ENCODE measurements at regions of chr9 and their contacts with region 1.

Region 1: DNA sequence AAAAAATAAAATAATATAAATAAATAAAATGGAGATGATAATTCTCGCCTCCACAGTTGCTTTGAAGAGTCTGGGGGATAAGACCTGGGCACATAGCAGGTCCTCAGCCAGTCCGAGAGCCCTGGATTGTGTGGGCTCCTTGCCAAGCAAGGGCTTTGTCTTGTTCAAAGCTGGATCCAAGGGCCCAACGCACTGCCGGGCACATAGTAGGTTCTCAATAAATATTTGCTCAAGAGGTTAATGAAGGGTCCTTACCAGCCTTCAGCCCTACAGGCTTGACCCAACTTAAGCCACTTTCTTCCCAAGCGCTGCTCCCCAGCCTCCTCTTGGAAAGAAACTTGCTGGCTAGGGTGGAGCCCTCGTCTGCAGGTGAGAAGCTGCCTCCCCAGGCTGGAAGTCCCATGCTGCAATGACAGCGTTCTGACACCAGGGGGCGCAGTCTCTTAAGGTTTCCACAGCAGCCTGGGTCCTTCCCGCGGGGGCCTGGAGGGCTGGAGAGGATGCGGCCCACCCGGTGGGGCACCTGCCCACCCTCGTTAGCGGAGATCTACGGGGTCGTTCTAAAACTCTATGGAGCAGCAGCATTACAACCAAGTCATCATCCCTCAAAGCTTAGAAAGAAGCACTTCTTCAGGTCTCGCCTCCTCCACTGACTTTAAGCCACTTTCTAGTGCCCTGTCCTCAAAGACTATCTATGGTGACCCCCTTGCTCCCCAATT is 115.2 kb downstream of the LHX2 start:
- DNase-seq: peak; percentile 70 to 82 (median 78)
- H3K4me3 ChIP-seq: no peak overlapping the region
- H3K27ac ChIP-seq: no peak overlapping the region
- H3K4me1 ChIP-seq: peaks cover 0 to 4% (median under 1%) of the 10 kb centered on the region in 4 experiments
- H3K27me3 ChIP-seq: no peaks in the 10 kb centered on the region

Region 2: DNA sequence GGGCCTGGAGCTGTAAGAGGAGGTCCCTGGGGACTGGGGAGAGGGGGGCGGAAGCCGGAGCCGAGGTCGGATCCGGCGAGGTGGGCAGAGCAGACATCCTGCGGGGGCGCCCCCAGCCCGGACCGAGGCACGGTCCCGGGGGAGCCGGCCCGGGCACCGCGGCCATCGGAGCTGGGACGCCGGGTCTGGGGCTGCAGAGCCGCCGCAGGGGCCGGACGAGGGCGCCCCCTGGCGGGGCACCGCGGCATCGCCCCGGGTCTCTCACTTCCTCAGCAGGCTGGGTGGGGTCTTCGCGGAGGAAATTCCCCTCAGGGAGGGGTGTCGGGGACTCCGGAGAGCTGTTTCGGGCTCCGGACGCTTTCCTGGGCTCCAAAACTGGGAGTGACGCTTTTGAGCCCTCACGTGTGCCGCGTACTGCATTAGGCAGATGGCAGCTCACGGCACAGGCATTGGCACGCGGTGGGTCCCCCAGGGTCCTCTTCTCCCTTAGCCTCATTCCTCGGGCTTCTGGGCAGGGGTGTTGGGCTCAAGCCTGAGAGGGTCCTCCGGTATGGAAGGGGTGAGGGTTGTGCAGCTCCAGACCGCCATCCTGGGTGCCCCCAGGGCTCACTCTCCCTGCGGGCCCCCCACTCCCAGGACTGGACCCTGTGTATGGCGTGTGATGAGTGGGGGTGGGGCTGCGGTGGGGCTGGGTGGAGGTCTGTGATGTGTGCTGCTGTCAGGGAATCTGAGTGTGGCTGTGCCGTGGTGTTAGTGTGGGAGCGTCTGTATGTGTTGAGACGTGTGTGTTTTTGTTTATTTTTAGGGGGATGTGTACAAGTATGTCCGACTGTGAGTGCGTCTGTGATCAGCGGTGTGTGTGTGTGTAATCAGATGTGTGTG is 85.6 kb before region 1 on chr9:
- CTCF ChIA-PET with region 1: no interaction called
- POLR2A ChIA-PET with region 1: no interaction called
- DNase-seq: peak in 2 of 3 donors; percentile 33 to 45
- H3K4me3 ChIP-seq: peak overlapping the region in 3 of 7 experiments; percentile 32 to 57 (median 34)
- H3K27ac ChIP-seq: no peak overlapping the region
- H3K4me1 ChIP-seq: peaks cover 0 to 15% (median 10%) of the 10 kb centered on the region in 4 experiments
- H3K27me3 ChIP-seq: peaks cover 0 to 99% (median 42%) of the 10 kb centered on the region in 5 experiments

Region 3: DNA sequence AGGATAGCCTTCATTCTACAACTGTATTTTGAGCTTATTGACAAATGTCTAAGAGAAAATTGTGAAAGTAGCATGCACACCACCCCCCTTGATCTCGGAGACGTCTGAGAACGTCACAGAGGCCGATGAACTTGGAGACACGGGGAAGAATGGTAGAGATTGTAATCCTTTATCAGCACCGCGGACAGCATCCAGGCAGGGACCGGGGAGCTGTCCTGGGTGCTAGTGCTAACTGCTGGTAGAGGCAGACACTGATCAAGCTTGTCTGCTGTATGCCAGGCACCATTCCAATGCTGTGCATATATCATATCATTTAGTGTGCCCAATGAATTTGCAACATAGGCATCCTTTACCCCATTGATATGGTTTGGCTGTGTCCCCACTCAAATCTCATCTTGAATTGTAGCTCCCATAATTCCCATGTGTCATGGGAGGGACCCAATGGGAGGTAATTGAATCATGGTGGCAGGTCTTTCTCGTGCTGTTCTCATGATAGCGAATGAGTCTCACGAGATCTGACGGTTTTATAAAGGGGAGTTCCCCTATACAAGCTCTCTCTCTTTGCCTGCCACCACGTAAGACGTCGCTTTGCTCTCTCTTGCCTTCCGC is 16.3 kb before region 1 on chr9:
- CTCF ChIA-PET with region 1: interaction called, 11 read pairs
- POLR2A ChIA-PET with region 1: no interaction called
- DNase-seq: peak; percentile 70 to 87 (median 86)
- H3K4me3 ChIP-seq: no peak overlapping the region
- H3K27ac ChIP-seq: no peak overlapping the region
- H3K4me1 ChIP-seq: no peaks in the 10 kb centered on the region
- H3K27me3 ChIP-seq: peaks cover 0 to 15% (median 7%) of the 10 kb centered on the region in 5 experiments

Region 4: DNA sequence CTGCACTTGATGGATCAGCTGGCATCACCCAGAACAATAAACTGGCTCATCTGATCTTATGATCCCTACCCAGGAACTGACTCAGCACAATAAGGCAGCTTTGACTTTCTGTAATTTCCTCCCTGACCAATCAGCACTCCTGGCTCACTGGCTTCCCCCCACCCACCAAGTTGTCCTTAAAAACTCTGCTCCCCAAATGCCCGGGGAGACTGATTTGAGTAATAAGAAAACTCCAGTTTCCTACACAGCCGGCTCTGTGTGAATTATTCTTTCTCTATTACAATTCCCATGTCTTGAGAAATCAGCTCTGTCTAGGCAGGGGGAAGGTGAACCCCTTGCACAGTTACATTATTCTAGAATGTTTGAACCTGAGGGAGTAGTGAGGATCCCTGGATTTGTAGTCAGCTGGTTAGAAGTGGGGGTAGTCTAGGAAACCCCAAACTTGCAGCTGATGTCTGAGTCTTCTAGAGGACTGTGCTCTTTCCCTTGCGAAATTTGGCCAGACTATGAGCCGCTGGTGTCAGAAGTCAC is 19.4 kb after region 1 on chr9:
- CTCF ChIA-PET with region 1: no interaction called
- POLR2A ChIA-PET with region 1: no interaction called
- DNase-seq: no peak
- H3K4me3 ChIP-seq: no peak overlapping the region
- H3K27ac ChIP-seq: no peak overlapping the region
- H3K4me1 ChIP-seq: no peaks in the 10 kb centered on the region
- H3K27me3 ChIP-seq: no peaks in the 10 kb centered on the region

Region 5: DNA sequence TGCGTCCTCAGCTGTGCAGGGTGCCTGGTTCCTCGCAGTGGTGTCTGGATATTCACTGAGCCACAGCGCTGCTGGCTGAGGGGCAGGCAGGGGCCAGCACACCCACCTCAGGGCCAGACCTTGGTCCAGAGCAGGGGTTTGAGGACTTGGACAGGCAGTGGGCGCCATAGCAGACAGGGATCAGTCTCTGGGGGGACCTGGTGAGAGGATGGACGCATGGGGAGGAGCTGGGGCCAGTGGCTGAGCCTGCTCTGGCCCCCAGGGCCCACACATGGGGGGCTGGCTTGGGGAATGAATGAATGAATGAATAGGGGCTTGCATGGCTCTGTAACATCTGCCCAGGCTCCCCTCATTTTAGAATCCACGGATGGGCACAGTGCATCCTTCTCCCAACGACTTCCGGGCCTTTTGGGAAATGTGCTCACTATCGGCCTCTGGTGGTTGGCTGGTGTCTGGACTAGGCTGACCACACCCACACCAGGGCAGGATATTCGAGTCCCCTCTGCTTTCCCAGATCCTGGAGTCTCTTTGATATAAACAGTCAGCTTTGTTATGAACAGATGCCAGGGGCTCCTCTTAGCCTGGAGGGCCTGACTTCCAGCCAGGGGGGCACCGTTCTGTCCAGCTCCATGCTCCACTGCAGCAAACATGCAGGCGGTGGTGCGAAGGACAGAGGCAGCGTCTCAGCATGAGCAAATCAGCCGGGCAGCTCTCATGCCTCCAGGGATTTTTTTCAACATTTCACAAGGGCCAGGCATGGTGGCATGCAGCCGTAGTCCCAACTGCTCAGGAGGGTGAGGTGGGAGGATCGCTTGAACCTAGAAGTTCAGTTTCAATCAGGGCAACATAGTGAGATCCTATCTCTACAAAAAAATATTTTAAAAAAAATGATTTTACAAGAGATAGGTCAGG is 193.6 kb after region 1 on chr9:
- CTCF ChIA-PET with region 1: interaction called, 20 read pairs
- POLR2A ChIA-PET with region 1: no interaction called
- DNase-seq: peak; percentile 29 to 43 (median 34)
- H3K4me3 ChIP-seq: no peak overlapping the region
- H3K27ac ChIP-seq: no peak overlapping the region
- H3K4me1 ChIP-seq: peaks cover 0 to 20% (median 8%) of the 10 kb centered on the region in 4 experiments
- H3K27me3 ChIP-seq: no peaks in the 10 kb centered on the region

Region 6: DNA sequence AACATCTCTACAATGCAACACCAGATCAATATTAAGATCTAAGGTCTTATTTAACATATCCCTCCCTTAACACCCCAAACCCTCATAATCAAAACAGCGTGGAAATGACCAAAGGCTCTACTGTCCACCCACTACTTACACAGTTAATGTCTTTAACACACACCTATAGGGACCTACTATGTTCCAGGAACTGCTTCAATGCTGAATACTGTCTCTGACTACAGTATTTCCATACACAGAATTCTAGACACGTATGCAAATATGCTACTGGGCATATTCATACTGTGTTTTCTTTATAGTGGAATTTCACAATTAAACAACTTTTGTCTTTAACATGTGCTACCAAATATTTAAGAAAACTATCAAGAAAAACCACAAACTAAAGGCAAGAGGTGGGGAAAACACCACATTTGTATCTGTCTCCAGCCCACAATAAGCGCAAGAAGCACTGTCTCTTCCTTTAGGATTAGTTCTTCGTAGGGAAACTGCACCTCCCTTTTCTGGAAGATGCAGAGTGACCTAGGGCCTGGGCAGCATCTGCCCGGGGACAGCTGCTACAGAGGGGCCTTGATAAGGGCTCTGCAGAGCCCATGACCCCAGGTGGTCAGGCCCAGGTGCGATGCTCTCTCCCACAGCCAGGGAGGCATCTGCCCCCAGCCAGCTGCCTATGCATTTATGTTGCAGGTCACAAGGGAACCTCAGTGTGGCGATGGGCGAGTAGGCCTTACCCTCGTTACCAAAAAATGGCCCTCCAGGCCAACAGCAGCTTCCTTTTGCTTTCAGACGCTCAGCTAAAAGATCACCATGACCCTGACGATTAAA is 233.3 kb after region 1 on chr9:
- CTCF ChIA-PET with region 1: interaction called, 11 read pairs
- POLR2A ChIA-PET with region 1: no interaction called
- DNase-seq: no peak
- H3K4me3 ChIP-seq: no peak overlapping the region
- H3K27ac ChIP-seq: no peak overlapping the region
- H3K4me1 ChIP-seq: no peaks in the 10 kb centered on the region
- H3K27me3 ChIP-seq: no peaks in the 10 kb centered on the region

Region 7: DNA sequence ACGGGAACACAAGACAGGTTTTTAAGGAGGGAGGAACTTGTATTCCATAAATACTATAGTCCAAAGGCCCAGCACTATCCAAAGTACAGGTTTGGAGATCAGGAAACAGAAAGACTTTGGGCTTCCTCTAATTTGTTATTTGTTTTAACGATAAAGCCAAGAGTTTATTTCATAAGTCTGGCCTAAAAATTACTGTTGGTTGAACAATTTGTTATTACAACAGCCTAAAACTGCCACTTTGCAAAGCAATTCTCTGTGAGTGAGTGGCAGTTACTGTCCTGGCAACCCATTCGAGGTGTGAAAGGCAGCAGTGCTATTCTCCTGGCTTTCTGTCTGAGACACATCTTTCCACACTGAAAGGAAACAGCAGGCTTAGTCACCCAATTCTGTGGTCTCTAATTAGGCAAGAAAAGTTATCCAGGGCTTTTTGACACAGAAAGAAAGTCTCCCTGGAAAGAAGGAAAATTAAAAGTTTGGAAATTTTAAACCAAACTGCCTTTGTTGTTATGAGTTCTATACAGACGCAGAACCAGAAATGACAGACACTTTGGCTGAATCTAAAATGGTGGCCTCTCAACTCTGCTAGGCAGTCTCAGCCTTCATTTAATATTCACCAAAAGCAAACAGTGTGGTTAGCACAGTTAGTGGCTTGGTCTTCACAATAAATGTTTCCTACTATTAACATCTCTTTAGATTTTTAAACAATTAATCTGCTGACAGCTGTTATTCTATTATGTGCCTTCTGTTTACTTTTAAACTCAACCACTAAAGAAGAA is 254.6 kb after region 1 on chr9:
- CTCF ChIA-PET with region 1: interaction called, 69 read pairs
- POLR2A ChIA-PET with region 1: no interaction called
- DNase-seq: peak in 2 of 3 donors; percentile 62 to 71
- H3K4me3 ChIP-seq: no peak overlapping the region
- H3K27ac ChIP-seq: peak overlapping the region in 1 of 2 experiments; percentile 54
- H3K4me1 ChIP-seq: peaks cover 0 to 11% (median 7%) of the 10 kb centered on the region in 4 experiments
- H3K27me3 ChIP-seq: no peaks in the 10 kb centered on the region

Region 8: DNA sequence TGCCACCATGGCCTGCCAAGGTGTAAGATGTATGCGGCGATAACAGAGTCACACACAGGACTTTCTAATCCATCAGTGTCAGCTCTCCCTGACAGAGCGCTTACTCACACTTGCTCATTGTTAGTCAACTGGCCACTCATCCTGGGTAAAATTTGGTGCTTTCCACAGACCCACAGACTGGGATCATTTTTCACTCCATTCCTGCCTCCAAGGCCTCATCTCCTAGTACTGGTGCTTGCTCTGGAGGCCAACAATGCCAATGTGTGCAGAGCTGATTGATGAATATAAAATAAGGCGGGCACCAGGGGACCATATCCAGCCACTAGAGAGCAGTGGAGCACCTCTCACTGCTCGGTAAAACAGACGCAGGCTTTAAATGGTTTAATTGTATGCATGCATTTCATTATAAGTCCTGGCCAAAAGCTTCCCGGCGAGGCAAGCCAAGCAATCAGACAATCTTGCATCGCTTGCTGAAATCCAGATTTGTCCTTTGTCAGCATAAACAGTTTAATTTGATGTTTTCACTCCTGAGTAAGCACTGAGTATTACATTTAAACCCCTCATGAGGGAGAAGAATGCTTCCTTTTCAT is 266.2 kb after region 1 on chr9:
- CTCF ChIA-PET with region 1: interaction called, 69 read pairs
- POLR2A ChIA-PET with region 1: no interaction called
- DNase-seq: no peak
- H3K4me3 ChIP-seq: no peak overlapping the region
- H3K27ac ChIP-seq: no peak overlapping the region
- H3K4me1 ChIP-seq: peaks cover 6 to 19% (median 10%) of the 10 kb centered on the region in 4 experiments
- H3K27me3 ChIP-seq: no peaks in the 10 kb centered on the region